HepG2 (cell line): ENCODE measurements at regions of chr10 and their contacts with region 1.

Region 1: GRCh38 chr10:72319416-72320254 is 35.1 kb downstream of the DNAJB12 start:
- DNase-seq: peak; percentile 86
- ATAC-seq: peak; percentile 72
- H3K4me3 ChIP-seq: peak overlapping the region; percentile 54 to 75 (median 55)
- H3K27ac ChIP-seq: peak overlapping the region; percentile 98
- H3K4me1 ChIP-seq: peaks cover 94% of the 10 kb centered on the region
- H3K27me3 ChIP-seq: no peaks in the 10 kb centered on the region
- CTCF ChIP-seq: no peak; the same call in 1 of the 2 replicates
- EP300 ChIP-seq: peak in 1 of 2 experiments; percentile 87; a peak in 3 of 4 replicates
- POLR2A ChIP-seq: peak in 1 of 2 experiments; percentile 51; a peak in 1 of 4 replicates
- RAD21 ChIP-seq: peak; percentile 42

Region 2: GRCh38 chr10:72030762-72031543 is 288.7 kb before region 1 on chr10:
- CTCF ChIA-PET with region 1: no interaction called
- POLR2A ChIA-PET with region 1: interaction called, 10 read pairs
- in situ Hi-C with region 1: no loop called
- intact Hi-C with region 1: no loop called
- DNase-seq: peak; percentile 97
- ATAC-seq: peak; percentile 89
- H3K4me3 ChIP-seq: peak overlapping the region; percentile 45 to 66 (median 58); a peak in 5 of 6 replicates
- H3K27ac ChIP-seq: peak overlapping the region; percentile 99
- H3K4me1 ChIP-seq: peaks cover 99% of the 10 kb centered on the region
- H3K27me3 ChIP-seq: no peaks in the 10 kb centered on the region
- CTCF ChIP-seq: peak; percentile 29; the same call in 1 of the 2 replicates
- EP300 ChIP-seq: peak; percentile 97 to 99
- POLR2A ChIP-seq: peak; percentile 65 to 82
- RAD21 ChIP-seq: peak; percentile 49; the same call in 1 of the 2 replicates

Region 3: GRCh38 chr10:72223743-72224101 is 95.9 kb before region 1 on chr10:
- CTCF ChIA-PET with region 1: no interaction called
- POLR2A ChIA-PET with region 1: interaction called, 17 read pairs
- in situ Hi-C with region 1: no loop called
- intact Hi-C with region 1: loop called (anchors 10 kb)
- DNase-seq: no peak
- ATAC-seq: no peak
- H3K4me3 ChIP-seq: no peak overlapping the region
- H3K27ac ChIP-seq: no peak overlapping the region
- H3K4me1 ChIP-seq: peaks cover 20% of the 10 kb centered on the region
- H3K27me3 ChIP-seq: no peaks in the 10 kb centered on the region
- CTCF ChIP-seq: no peak
- EP300 ChIP-seq: no peak
- POLR2A ChIP-seq: no peak
- RAD21 ChIP-seq: no peak

Region 4: GRCh38 chr10:72254813-72255568 is 64.6 kb before region 1 on chr10:
- CTCF ChIA-PET with region 1: no interaction called
- POLR2A ChIA-PET with region 1: interaction called, 53 read pairs
- in situ Hi-C with region 1: no loop called
- intact Hi-C with region 1: no loop called
- DNase-seq: no peak
- ATAC-seq: peak; percentile 85
- H3K4me3 ChIP-seq: peak overlapping the region; percentile 54 to 72 (median 57)
- H3K27ac ChIP-seq: peak overlapping the region; percentile 74
- H3K4me1 ChIP-seq: peaks cover 93% of the 10 kb centered on the region
- H3K27me3 ChIP-seq: no peaks in the 10 kb centered on the region
- CTCF ChIP-seq: peak; percentile 51; the same call in 1 of the 2 replicates
- EP300 ChIP-seq: peak in 1 of 2 experiments; percentile 19; a peak in 1 of 4 replicates
- POLR2A ChIP-seq: peak in 1 of 2 experiments; percentile 70; a peak in 2 of 4 replicates
- RAD21 ChIP-seq: no peak

Region 5: GRCh38 chr10:72308320-72308987 is 11.2 kb before region 1 on chr10:
- CTCF ChIA-PET with region 1: no interaction called
- POLR2A ChIA-PET with region 1: interaction called, 168 read pairs
- in situ Hi-C with region 1: no loop called
- intact Hi-C with region 1: no loop called
- DNase-seq: peak; percentile 64
- ATAC-seq: peak; percentile 69
- H3K4me3 ChIP-seq: peak overlapping the region in 2 of 3 experiments; percentile 20 to 55; a peak in 3 of 6 replicates
- H3K27ac ChIP-seq: peak overlapping the region; percentile 26
- H3K4me1 ChIP-seq: peaks cover 59% of the 10 kb centered on the region
- H3K27me3 ChIP-seq: no peaks in the 10 kb centered on the region
- CTCF ChIP-seq: no peak
- EP300 ChIP-seq: no peak
- POLR2A ChIP-seq: no peak
- RAD21 ChIP-seq: no peak